ENCODE measurements at regions of chr2 and their contacts with region 1.

Region 1: DNA sequence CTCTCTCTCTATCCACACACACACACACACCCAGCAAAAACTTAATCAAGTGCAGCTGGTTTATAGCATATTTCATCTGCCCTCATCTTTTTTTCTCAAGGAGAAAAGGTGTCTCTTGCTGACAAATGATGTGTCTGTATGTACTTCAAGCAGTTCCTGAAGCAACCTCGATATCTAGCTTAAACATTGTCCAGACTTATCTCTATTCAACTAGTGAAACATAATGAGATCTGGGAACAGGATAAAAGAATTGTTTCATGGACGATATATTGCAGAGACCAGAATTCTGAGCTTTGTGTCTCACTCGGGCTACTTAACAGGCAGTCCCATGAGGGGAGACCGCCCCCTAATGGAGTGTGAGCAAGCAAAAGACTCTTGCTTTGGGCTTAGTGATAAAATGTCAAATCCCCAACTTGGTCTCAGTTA is 929.2 kb upstream of the SOX11 start:
- DNase-seq: no peak
- ATAC-seq: no peak
- H3K4me3 ChIP-seq: no peak overlapping the region
- H3K4me3 Mint-ChIP-seq: no peak overlapping the region
- H3K27ac ChIP-seq: no peak overlapping the region
- H3K27ac Mint-ChIP-seq: no peak overlapping the region
- H3K4me1 ChIP-seq: no peaks in the 10 kb centered on the region
- H3K4me1 Mint-ChIP-seq: no peaks in the 10 kb centered on the region
- H3K27me3 ChIP-seq: no peaks in the 10 kb centered on the region
- H3K27me3 Mint-ChIP-seq: no peaks in the 10 kb centered on the region
- CTCF ChIP-seq: no peak

Region 2: GRCh38 chr2:4775668-4776067 is 12.7 kb after region 1 on chr2:
- CTCF ChIA-PET with region 1: no interaction called
- POLR2A ChIA-PET with region 1: no interaction called
- intact Hi-C with region 1: loop called in 1 of 2 experiments (anchors 2 kb)
- DNase-seq: no peak
- ATAC-seq: no peak
- H3K4me3 ChIP-seq: no peak overlapping the region
- H3K4me3 Mint-ChIP-seq: no peak overlapping the region
- H3K27ac ChIP-seq: no peak overlapping the region
- H3K27ac Mint-ChIP-seq: no peak overlapping the region
- H3K4me1 ChIP-seq: no peaks in the 10 kb centered on the region
- H3K4me1 Mint-ChIP-seq: no peaks in the 10 kb centered on the region
- H3K27me3 ChIP-seq: no peaks in the 10 kb centered on the region
- H3K27me3 Mint-ChIP-seq: no peaks in the 10 kb centered on the region
- CTCF ChIP-seq: no peak

Region 3: GRCh38 chr2:4930704-4931103 is 167.7 kb after region 1 on chr2:
- CTCF ChIA-PET with region 1: no interaction called
- POLR2A ChIA-PET with region 1: no interaction called
- intact Hi-C with region 1: no loop called
- DNase-seq: no peak
- ATAC-seq: no peak
- H3K4me3 ChIP-seq: no peak overlapping the region
- H3K4me3 Mint-ChIP-seq: no peak overlapping the region
- H3K27ac ChIP-seq: no peak overlapping the region
- H3K27ac Mint-ChIP-seq: no peak overlapping the region
- H3K4me1 ChIP-seq: no peaks in the 10 kb centered on the region
- H3K4me1 Mint-ChIP-seq: no peaks in the 10 kb centered on the region
- H3K27me3 ChIP-seq: no peaks in the 10 kb centered on the region
- H3K27me3 Mint-ChIP-seq: no peaks in the 10 kb centered on the region
- CTCF ChIP-seq: no peak

Measured in CD8-positive, alpha-beta T cell (primary cell).